ENCODE measurements at regions of chr12 and their contacts with region 1.

Region 1: GRCh38 chr12:56117778-56118687 is at the start of gene ZC3H10:
- DNase-seq: peak; percentile 99
- H3K4me3 ChIP-seq: peak within 1 kb of the TSS; percentile 70 to 98 (median 72)
- H3K27ac ChIP-seq: peak within 1 kb of the TSS; percentile 86
- H3K4me1 ChIP-seq: peaks cover 24% of the 10 kb centered on the region
- H3K27me3 ChIP-seq: no peaks in the 10 kb centered on the region
- CTCF ChIP-seq: peak; percentile 42 to 62
- POLR2A ChIP-seq: peak; percentile 100
- total RNA-seq, gene ZC3H10: 8.7 and 10.1 TPM in 2 replicates

Region 2: GRCh38 chr12:55899082-55899481 is 219.0 kb before region 1 on chr12:
- CTCF ChIA-PET with region 1: no interaction called
- POLR2A ChIA-PET with region 1: no interaction called
- dilution Hi-C with region 1: no loop called
- intact Hi-C with region 1: no loop called
- DNase-seq: no peak
- H3K4me3 ChIP-seq: no peak overlapping the region
- H3K27ac ChIP-seq: no peak overlapping the region
- H3K4me1 ChIP-seq: no peaks in the 10 kb centered on the region
- H3K27me3 ChIP-seq: no peaks in the 10 kb centered on the region
- CTCF ChIP-seq: no peak
- POLR2A ChIP-seq: no peak

Region 3: GRCh38 chr12:56078990-56079664 is 38.9 kb before region 1 on chr12:
- CTCF ChIA-PET with region 1: interaction called, 5 read pairs
- POLR2A ChIA-PET with region 1: no interaction called
- dilution Hi-C with region 1: no loop called
- intact Hi-C with region 1: loop called (anchors 1 kb)
- DNase-seq: peak; percentile 93
- H3K4me3 ChIP-seq: peak overlapping the region; percentile 31 to 58 (median 36)
- H3K27ac ChIP-seq: no peak overlapping the region
- H3K4me1 ChIP-seq: peaks cover 8% of the 10 kb centered on the region
- H3K27me3 ChIP-seq: peaks cover 2 to 4% of the 10 kb centered on the region in 2 experiments
- CTCF ChIP-seq: peak; percentile 81 to 82
- POLR2A ChIP-seq: no peak

Region 4: DNA sequence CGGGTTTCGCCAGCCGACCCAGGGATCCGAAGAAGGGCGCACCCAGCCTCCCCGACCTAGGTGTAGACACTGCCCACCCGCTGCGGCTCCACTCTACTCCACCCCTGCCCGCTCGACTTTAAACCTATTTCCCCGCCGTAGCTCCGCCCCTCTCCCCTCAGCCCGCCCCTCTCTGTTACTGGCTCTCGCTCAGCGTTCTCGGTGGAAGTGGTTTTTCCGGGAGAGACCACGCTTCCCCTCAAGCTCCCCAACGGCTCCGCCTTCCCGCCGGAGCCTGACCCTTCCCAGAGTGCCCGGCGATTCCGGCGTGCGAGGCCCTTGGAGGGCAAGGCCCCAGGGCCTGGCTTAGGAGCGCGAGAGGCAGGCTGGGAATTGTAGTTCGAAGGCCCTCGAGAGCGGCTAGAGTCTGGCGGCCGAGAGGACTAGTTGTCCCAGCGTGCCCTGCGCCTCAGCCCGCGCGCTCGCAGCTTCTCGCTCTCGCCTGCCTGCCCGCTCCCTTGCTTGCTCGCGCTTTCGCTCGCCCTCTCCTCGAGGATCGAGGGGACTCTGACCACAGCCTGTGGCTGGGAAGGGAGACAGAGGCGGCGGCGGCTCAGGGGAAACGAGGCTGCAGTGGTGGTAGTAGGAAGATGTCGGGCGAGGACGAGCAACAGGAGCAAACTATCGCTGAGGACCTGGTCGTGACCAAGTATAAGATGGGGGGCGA is 13.8 kb before region 1 on chr12 and contains the start of gene PA2G4:
- CTCF ChIA-PET with region 1: interaction called, 23 read pairs
- POLR2A ChIA-PET with region 1: interaction called, 37 read pairs
- dilution Hi-C with region 1: no loop called
- intact Hi-C with region 1: loop called (anchors 1 kb)
- DNase-seq: peak; percentile 99
- H3K4me3 ChIP-seq: peak within 1 kb of the TSS; percentile 49 to 85 (median 68)
- H3K27ac ChIP-seq: peak within 1 kb of the TSS; percentile 60
- H3K4me1 ChIP-seq: peaks cover 25% of the 10 kb centered on the region
- H3K27me3 ChIP-seq: peaks cover 0 to 6% of the 10 kb centered on the region in 2 experiments
- CTCF ChIP-seq: no peak
- POLR2A ChIP-seq: peak; percentile 96
- total RNA-seq, gene PA2G4: 170 and 188 TPM in 2 replicates

Region 5: GRCh38 chr12:56158029-56158925 is 40.2 kb after region 1 on chr12 and contains the start of gene MYL6:
- CTCF ChIA-PET with region 1: interaction called, 13 read pairs
- POLR2A ChIA-PET with region 1: interaction called, 8 read pairs
- dilution Hi-C with region 1: no loop called
- intact Hi-C with region 1: loop called (anchors 1 kb)
- DNase-seq: peak; percentile 96
- H3K4me3 ChIP-seq: peak within 1 kb of the TSS; percentile 78 to 98 (median 91)
- H3K27ac ChIP-seq: peak within 1 kb of the TSS; percentile 87
- H3K4me1 ChIP-seq: peaks cover 25% of the 10 kb centered on the region
- H3K27me3 ChIP-seq: no peaks in the 10 kb centered on the region
- CTCF ChIP-seq: no peak
- POLR2A ChIP-seq: peak; percentile 99
- total RNA-seq, gene MYL6: 2,364 and 2,543 TPM in 2 replicates

Region 6: GRCh38 chr12:56258057-56258819 is 140.2 kb after region 1 on chr12 and contains the start of gene ANKRD52:
- CTCF ChIA-PET with region 1: interaction called, 3 read pairs
- POLR2A ChIA-PET with region 1: no interaction called
- dilution Hi-C with region 1: no loop called
- intact Hi-C with region 1: loop called (anchors 1 kb)
- DNase-seq: peak; percentile 76
- H3K4me3 ChIP-seq: peak within 1 kb of the TSS; percentile 84 to 96 (median 91)
- H3K27ac ChIP-seq: peak within 1 kb of the TSS; percentile 22
- H3K4me1 ChIP-seq: peaks cover 18% of the 10 kb centered on the region
- H3K27me3 ChIP-seq: no peaks in the 10 kb centered on the region
- CTCF ChIP-seq: peak; percentile 67 to 74
- POLR2A ChIP-seq: peak; percentile 57
- total RNA-seq, gene ANKRD52: 62.0 and 66.3 TPM in 2 replicates

Region 7: GRCh38 chr12:56468216-56469006 is 350.4 kb after region 1 on chr12 and contains the start of gene SPRYD4:
- CTCF ChIA-PET with region 1: no interaction called
- POLR2A ChIA-PET with region 1: no interaction called
- dilution Hi-C with region 1: no loop called
- intact Hi-C with region 1: loop called (anchors 1 kb)
- DNase-seq: peak; percentile 92
- H3K4me3 ChIP-seq: peak within 1 kb of the TSS; percentile 66 to 93 (median 93)
- H3K27ac ChIP-seq: peak within 1 kb of the TSS; percentile 58
- H3K4me1 ChIP-seq: peaks cover 7% of the 10 kb centered on the region
- H3K27me3 ChIP-seq: no peaks in the 10 kb centered on the region
- CTCF ChIP-seq: peak; percentile 8 to 14
- POLR2A ChIP-seq: peak; percentile 97
- total RNA-seq, gene SPRYD4: 3.4 and 3.5 TPM in 2 replicates

Measured in endothelial cell of umbilical vein (primary cell).